Sigmoid colon (tissue), 7 donors: ENCODE measurements at regions of chr3 and their contacts with region 1.

Region 1: DNA sequence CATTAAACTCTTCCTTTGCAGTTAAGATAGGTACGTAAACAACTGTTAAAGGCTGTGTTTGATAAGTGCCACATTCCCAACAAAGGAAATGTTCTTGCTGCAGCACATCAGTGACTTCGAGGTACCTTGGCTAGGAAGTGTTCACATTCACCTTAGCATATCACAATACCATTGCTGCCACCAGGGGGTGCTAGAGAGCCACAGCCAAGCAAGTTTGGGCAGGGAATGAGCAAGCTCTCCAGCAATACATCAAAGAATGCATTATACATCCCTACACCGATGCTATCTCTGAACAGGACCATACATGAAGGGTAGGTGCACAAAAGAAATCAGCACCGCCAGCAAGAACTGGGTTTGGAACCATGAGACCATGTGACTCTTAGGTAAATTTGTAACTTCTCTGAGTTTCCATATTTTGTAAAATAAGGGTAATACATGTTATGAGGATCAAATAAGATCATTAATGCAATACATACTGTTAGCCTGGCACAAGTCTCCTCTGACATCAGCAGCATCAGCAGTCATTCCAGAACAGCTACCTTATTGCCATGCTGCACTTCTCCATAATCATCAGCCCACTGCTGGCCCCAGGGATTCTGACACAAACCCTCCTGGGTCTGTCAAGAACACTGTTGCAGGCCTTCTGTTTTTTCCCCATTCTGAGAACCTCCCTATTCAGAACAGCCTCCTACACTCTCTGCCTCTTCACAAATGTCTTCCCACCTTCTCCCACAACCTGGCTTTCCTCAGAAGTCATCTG is 37.6 kb downstream of the RYK start:
- DNase-seq: peak; percentile 85
- H3K4me3 ChIP-seq: no peak overlapping the region
- H3K27ac ChIP-seq: no peak overlapping the region
- H3K4me1 ChIP-seq: peaks cover 0 to 17% (median 4%) of the 10 kb centered on the region in 4 donors
- H3K27me3 ChIP-seq: no peaks in the 10 kb centered on the region
- CTCF ChIP-seq: peak; percentile 77 to 99 (median 92)
- EP300 ChIP-seq: no peak
- POLR2A ChIP-seq: no peak

Region 2: GRCh38 chr3:134250717-134251220 is 37.7 kb after region 1 on chr3 and contains the start of gene RYK:
- intact Hi-C with region 1: loop called (anchors 5 kb)
- DNase-seq: peak; percentile 84
- H3K4me3 ChIP-seq: peak within 1 kb of the TSS; percentile 67 to 93 (median 83)
- H3K27ac ChIP-seq: peak within 1 kb of the TSS; percentile 83 to 95 (median 93)
- H3K4me1 ChIP-seq: peaks cover 0 to 51% (median 36%) of the 10 kb centered on the region in 4 donors
- H3K27me3 ChIP-seq: no peaks in the 10 kb centered on the region
- CTCF ChIP-seq: no peak
- EP300 ChIP-seq: no peak
- POLR2A ChIP-seq: peak; percentile 37 to 48
- total RNA-seq, gene RYK: 92.2 to 148 (median 102) TPM

Region 3: DNA sequence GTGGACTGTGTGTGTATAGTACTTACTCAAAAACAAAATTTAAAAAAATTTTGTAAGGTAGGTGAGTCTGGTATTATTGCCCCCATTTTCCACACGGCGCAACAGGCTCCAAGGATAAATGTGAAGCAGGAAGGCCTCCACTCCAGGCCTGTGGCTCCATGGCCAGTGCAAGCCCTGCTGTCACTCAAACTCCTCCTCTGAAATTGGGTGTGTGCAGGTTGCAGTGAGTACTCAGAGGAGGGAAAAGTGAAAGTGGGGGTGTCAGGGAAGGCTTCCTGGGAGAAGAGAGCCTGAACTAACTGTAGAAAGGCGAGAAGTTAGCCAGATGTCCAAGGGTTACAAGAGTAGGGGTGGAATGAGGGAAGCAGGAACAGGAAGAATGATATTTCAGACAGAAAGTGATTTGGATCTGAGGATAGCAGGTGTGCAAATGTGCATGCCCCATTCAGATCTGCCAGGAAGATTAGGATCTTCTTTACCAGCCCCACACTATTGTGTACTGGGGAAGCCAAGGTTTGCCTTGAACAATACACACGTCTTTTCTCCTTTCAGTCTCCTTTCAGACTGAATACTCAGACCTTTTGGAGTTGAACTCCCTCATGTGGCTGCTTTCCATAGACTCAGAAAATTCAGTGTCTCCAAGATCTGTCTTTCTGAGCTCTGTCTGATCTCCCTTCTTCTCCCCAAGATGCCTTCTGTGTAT is 86.2 kb after region 1 on chr3:
- intact Hi-C with region 1: loop called (anchors 1 kb)
- DNase-seq: no peak
- H3K4me3 ChIP-seq: no peak overlapping the region
- H3K27ac ChIP-seq: peak overlapping the region in 1 of 4 donors; percentile 25
- H3K4me1 ChIP-seq: peaks cover 0 to 4% (median 0%) of the 10 kb centered on the region in 4 donors
- H3K27me3 ChIP-seq: no peaks in the 10 kb centered on the region
- CTCF ChIP-seq: peak in 3 of 4 experiments; percentile 39 to 48 (median 43)
- EP300 ChIP-seq: no peak
- POLR2A ChIP-seq: no peak

Region 4: GRCh38 chr3:134357261-134358184 is 144.4 kb after region 1 on chr3:
- intact Hi-C with region 1: no loop called
- DNase-seq: peak; percentile 81
- H3K4me3 ChIP-seq: no peak overlapping the region
- H3K27ac ChIP-seq: peak overlapping the region; percentile 98 to 100 (median 100)
- H3K4me1 ChIP-seq: peaks cover 0 to 100% (median 94%) of the 10 kb centered on the region in 4 donors
- H3K27me3 ChIP-seq: no peaks in the 10 kb centered on the region
- CTCF ChIP-seq: no peak
- EP300 ChIP-seq: peak in 2 of 4 donors; percentile 47 to 55
- POLR2A ChIP-seq: no peak

Region 5: DNA sequence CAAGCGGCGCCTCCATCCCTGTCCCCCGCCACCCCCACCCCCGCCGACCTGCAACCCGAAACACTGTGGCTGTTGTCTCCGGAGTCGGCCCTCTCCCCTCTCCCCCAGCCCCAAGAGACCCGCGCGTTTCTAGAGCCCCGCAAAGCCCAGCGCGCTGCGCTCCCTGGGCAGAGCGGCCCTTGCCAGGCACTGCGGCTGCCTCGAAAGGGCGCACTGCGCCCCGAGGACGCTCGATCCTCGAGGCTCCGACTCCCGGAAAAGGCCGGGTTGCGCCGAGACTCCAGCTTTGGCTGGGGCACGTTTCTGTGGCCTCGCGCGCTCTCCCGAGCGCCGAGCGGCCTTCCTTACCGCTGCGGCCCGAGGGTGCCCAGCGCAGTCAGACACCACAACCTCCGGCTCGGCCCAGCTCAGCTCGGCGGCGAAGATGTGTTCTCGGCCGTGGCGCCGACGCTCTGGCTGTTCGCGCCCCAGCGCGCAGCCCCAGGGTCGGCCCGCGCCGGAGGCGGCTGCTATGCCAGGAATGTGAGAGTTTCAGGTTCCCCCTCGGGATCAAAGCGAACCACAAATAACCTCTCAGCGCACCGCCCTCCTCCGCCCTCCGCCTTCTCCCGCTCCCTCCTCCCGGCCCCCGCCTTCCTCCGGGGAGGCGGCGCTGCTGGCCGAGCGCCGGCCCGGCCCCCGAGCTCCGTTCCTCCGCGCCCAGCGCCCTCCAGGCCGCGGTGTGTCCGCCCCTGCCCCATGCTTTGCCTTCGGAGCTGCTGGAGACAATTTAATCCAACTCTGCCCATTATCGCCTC is 161.1 kb after region 1 on chr3 and contains the start of gene AMOTL2:
- intact Hi-C with region 1: loop called (anchors 5 kb)
- DNase-seq: peak; percentile 95
- H3K4me3 ChIP-seq: peak within 1 kb of the TSS; percentile 64 to 78 (median 74)
- H3K27ac ChIP-seq: peak within 1 kb of the TSS; percentile 98 to 100 (median 100)
- H3K4me1 ChIP-seq: peaks cover 0 to 54% (median 50%) of the 10 kb centered on the region in 4 donors
- H3K27me3 ChIP-seq: no peaks in the 10 kb centered on the region
- CTCF ChIP-seq: no peak
- EP300 ChIP-seq: peak in 1 of 4 donors; percentile 52
- POLR2A ChIP-seq: peak; percentile 80 to 94
- total RNA-seq, gene AMOTL2: 43.5 to 112 (median 47.6) TPM

Region 6: DNA sequence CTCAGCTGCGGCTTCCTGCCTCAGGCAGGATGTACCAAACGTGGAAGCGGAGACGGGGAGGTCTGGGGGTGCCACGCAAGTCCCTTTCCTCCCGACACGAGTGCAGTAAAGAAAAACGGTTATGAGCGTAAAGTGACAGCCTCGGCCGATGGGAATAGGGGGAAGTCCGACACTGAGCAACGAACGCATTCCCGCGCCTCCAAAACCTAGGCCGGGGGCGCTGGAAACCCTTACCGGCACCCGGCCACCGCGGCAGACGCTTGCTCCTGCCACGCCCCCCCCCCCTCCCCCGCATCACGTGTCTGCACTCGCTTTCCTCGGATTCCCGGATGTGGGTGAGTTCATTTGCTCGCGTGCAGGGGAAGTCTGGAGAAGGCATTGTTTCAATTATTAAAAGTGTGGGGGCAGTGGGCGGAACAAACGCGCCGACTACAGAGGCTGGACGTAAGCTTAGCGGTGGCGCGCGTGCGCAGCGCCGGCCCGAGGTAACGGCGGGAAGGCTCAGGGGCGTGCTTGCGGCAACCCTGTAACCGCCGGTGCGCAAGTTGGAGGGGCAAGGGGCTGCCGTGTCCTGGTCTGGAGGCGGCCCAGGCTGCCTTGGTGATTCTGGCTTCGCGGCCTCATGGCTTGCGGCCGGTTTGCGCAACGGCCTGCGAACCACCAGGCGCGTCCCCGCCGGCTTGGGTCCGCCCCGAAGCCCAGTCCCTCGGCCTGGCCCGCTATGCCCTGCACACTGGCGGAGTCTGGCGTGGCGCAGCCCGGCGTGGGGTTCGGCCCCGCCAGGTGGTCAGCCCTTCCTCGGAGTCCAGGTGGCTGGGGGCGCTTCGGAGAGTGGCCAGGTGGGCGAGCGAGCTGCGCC is 272.9 kb after region 1 on chr3 and contains the starts of genes ANAPC13 and CEP63:
- intact Hi-C with region 1: loop called (anchors 5 kb)
- DNase-seq: peak; percentile 98
- H3K4me3 ChIP-seq: peak within 1 kb of the TSS; percentile 59 to 81 (median 75)
- H3K27ac ChIP-seq: peak within 1 kb of the TSS; percentile 94 to 97 (median 96)
- H3K4me1 ChIP-seq: peaks cover 0 to 41% (median 32%) of the 10 kb centered on the region in 4 donors
- H3K27me3 ChIP-seq: no peaks in the 10 kb centered on the region
- CTCF ChIP-seq: no peak
- EP300 ChIP-seq: no peak
- POLR2A ChIP-seq: peak; percentile 35 to 62
- total RNA-seq, gene ANAPC13: 46.7 to 78.1 (median 61.1) TPM
- total RNA-seq, gene CEP63: 22.5 to 33.5 (median 25.6) TPM